Body of pancreas (tissue), 4 donors: ENCODE measurements at regions of chr22 and their contacts with region 1.

Region 1: DNA sequence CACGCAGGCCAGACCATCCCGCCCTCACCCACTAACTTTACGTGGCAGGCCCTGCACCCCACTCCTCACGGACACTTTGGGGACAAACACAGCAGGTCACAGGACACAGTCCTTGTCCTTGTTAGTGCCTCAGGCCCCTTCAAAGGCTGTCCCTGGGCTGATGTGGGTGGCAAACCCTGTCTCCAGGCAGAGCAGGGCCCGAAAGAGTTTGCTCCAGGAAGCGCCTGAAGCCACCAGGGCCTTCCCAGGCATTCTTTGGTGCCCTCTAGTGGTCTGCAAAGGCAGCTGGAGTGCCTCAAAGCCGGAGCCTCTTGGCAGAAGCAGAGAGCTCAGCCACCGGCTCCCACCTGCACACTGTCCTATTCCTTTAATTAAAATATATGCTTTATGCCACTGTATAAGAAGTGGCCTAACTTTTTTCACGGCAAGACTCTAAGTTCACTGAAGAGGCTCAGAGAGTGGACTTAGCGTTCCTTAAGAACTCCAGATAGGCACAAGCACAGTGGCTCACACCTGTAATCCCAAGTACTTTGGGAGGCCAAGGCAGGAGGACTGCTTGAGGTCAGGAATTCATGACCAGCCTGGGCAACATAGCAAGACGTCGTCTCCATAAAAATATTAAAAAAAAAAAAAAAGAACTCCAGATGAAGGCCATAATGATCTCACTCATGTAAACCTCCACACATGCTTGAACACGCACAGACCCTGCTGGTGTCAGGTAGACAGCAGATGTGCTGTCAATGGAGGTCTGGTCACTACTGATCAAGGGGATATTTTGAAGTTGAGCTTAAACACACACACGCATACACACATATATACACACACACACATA is 11.1 kb downstream of the TXN2 start:
- DNase-seq: peak; percentile 84 to 91 (median 88)
- ATAC-seq: peak; percentile 62
- H3K4me3 ChIP-seq: no peak overlapping the region
- H3K27ac ChIP-seq: peak overlapping the region; percentile 15 to 54 (median 32)
- H3K4me1 ChIP-seq: peaks cover 27% of the 10 kb centered on the region
- H3K27me3 ChIP-seq: no peaks in the 10 kb centered on the region
- CTCF ChIP-seq: peak; percentile 89 to 96 (median 95)
- POLR2A ChIP-seq: no peak

Region 2: GRCh38 chr22:36301384-36301828 is 169.0 kb before region 1 on chr22:
- intact Hi-C with region 1: loop called (anchors 5 kb)
- DNase-seq: peak; percentile 78 to 82 (median 80)
- ATAC-seq: peak; percentile 78
- H3K4me3 ChIP-seq: no peak overlapping the region
- H3K27ac ChIP-seq: peak overlapping the region in 1 of 4 donors; percentile 17
- H3K4me1 ChIP-seq: no peaks in the 10 kb centered on the region
- H3K27me3 ChIP-seq: no peaks in the 10 kb centered on the region
- CTCF ChIP-seq: peak; percentile 86 to 93 (median 90)
- POLR2A ChIP-seq: peak in 1 of 3 donors; percentile 7

Region 3: GRCh38 chr22:36659762-36660509 is 189.6 kb after region 1 on chr22:
- intact Hi-C with region 1: no loop called
- DNase-seq: peak; percentile 86 to 98 (median 92)
- ATAC-seq: peak; percentile 88
- H3K4me3 ChIP-seq: no peak overlapping the region
- H3K27ac ChIP-seq: peak overlapping the region; percentile 31 to 83 (median 60)
- H3K4me1 ChIP-seq: peaks cover 18% of the 10 kb centered on the region
- H3K27me3 ChIP-seq: no peaks in the 10 kb centered on the region
- CTCF ChIP-seq: no peak
- POLR2A ChIP-seq: no peak